Ascending aorta (tissue), 2 donors: ENCODE measurements at regions of chr2 and their contacts with region 1.

Region 1: GRCh38 chr2:64988420-64989125 is 626 bp upstream of the SLC1A4 start:
- DNase-seq: peak in 1 of 2 donors; percentile 80
- H3K4me3 ChIP-seq: peak overlapping the region; percentile 99
- H3K27ac ChIP-seq: peak overlapping the region; percentile 97 to 99
- H3K4me1 ChIP-seq: peaks cover 0 to 27% of the 10 kb centered on the region in 2 donors
- H3K27me3 ChIP-seq: no peaks in the 10 kb centered on the region
- CTCF ChIP-seq: peak; percentile 53 to 55 (median 54)

Region 2: DNA sequence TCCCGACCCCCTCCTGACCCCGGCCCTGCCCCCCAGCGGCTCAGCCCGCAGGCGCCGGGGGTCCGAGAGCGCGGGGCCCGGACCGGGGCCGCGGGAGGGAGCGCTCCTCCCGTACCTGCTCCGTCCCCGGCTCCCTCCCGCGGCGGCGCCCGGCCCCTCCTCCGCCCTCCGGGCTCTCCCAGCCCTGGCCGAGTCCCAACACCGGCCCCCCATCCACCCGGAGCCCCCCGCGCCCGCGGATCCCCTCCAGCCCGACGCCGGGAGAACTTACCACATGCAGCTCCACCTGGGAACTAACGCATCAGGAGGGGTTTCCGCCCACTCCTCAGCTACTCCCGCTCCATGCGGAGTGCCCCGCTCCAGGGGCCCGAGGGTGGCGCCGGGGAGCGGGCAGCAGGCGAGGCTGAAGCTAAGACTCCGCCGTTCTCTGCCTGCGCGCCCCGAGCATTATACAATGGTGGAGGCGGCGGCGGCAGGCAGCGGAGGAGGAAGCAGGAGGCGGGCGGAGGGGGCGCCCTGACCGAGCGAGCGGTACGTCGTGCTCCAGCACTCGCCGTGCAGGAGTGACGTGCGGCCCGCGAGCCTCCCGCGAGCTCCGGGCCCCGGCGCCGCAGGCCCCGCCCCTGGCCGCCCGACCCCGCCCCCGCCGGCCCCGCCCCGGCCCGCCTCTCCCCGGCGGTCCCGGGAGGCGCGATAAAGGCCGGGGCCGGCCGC is 335.1 kb before region 1 on chr2 and contains the start of gene SERTAD2:
- intact Hi-C with region 1: loop called (anchors 5 kb)
- DNase-seq: peak; percentile 49 to 94
- H3K4me3 ChIP-seq: peak within 1 kb of the TSS; percentile 95 to 98
- H3K27ac ChIP-seq: peak within 1 kb of the TSS; percentile 99
- H3K4me1 ChIP-seq: peaks cover 0 to 21% of the 10 kb centered on the region in 2 donors
- H3K27me3 ChIP-seq: no peaks in the 10 kb centered on the region
- CTCF ChIP-seq: no peak
- total RNA-seq, gene SERTAD2: 8.7 TPM

Region 3: DNA sequence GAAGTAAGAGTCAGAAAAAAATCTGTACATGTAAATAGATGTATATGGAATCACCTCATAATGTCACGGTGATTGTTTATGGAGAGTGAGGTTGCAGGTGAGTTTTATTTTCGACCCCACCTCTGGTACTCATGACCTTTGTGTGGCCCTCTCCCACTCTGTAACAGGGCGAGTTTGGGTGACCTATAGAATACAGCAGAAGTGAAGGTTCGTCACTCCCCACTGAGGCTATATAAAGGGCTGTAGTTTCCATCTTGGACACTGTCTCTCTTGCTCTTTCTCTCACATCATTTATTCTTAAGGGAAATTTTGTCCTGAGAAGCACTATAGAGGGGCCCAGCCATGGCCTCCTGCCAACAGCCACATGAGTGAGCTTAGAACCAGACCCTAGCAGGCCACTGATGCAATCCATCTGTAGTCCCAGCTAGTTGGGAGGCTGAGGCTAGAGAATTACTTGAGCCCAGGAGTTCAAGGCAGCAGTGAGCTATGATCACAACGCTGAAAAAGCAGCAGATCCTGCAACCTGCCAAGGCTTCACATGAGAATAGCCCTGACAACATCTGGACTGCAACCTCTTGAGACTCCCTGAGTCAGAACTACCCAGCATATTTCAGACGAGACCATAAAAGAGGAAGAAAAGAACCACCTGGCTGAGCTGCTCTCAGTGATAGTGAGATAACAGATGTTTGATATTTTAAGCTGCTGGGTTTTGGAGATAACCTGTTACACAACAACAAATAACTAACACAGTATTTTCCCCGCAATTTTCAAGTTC is 73.7 kb before region 1 on chr2:
- intact Hi-C with region 1: loop called (anchors 5 kb)
- DNase-seq: no peak
- H3K4me3 ChIP-seq: no peak overlapping the region
- H3K27ac ChIP-seq: no peak overlapping the region
- H3K4me1 ChIP-seq: no peaks in the 10 kb centered on the region
- H3K27me3 ChIP-seq: no peaks in the 10 kb centered on the region
- CTCF ChIP-seq: no peak

Region 4: GRCh38 chr2:64943387-64944150 is 45.0 kb before region 1 on chr2:
- intact Hi-C with region 1: loop called (anchors 2 kb)
- DNase-seq: peak; percentile 31 to 88
- H3K4me3 ChIP-seq: no peak overlapping the region
- H3K27ac ChIP-seq: peak overlapping the region; percentile 49 to 59
- H3K4me1 ChIP-seq: peaks cover 4 to 11% of the 10 kb centered on the region in 2 donors
- H3K27me3 ChIP-seq: no peaks in the 10 kb centered on the region
- CTCF ChIP-seq: no peak

Region 5: DNA sequence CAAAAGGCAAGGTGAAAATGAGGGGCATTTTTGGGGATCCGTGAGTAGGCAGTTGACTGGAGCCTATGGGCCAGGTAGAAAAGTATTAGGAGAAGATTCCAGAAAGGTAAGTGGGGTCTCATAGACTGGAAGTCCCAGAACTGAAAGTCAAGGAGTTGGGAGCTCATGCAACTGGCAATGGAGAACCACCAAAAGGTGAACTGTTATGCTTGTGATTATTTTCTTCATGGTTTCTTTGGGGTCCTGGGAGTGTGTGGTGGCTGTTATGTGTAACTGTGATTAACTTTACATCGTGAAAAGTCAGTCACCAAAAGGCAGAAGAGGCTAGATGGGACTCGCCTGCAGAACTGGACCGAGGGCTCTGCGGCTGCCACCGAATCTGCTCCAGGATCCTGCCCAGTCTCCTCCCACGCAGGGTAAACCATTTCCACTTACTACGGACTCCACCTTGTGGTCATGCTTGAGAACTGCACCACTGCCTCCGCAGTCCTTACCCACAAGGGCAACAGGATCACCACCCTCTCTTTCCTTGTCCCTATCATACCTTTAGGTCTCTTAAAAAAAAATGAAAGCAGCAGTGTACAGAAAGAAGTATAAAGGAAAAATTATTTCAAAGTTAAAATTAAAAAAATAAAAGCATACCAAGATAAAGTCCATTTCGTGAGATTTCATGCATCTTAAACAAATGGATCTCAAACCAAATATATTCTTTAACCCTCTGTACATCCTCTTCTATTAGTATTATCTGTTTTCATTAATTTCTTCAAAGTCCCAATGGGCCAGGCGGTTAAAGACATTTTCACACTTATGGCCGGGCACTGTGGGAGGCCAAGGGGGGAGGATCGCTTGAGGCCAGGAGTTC is 52.1 kb after region 1 on chr2:
- intact Hi-C with region 1: loop called (anchors 5 kb)
- DNase-seq: peak; percentile 56 to 93
- H3K4me3 ChIP-seq: peak overlapping the region; percentile 32 to 33
- H3K27ac ChIP-seq: no peak overlapping the region
- H3K4me1 ChIP-seq: no peaks in the 10 kb centered on the region
- H3K27me3 ChIP-seq: no peaks in the 10 kb centered on the region
- CTCF ChIP-seq: peak; percentile 91 to 97 (median 97)

Region 6: DNA sequence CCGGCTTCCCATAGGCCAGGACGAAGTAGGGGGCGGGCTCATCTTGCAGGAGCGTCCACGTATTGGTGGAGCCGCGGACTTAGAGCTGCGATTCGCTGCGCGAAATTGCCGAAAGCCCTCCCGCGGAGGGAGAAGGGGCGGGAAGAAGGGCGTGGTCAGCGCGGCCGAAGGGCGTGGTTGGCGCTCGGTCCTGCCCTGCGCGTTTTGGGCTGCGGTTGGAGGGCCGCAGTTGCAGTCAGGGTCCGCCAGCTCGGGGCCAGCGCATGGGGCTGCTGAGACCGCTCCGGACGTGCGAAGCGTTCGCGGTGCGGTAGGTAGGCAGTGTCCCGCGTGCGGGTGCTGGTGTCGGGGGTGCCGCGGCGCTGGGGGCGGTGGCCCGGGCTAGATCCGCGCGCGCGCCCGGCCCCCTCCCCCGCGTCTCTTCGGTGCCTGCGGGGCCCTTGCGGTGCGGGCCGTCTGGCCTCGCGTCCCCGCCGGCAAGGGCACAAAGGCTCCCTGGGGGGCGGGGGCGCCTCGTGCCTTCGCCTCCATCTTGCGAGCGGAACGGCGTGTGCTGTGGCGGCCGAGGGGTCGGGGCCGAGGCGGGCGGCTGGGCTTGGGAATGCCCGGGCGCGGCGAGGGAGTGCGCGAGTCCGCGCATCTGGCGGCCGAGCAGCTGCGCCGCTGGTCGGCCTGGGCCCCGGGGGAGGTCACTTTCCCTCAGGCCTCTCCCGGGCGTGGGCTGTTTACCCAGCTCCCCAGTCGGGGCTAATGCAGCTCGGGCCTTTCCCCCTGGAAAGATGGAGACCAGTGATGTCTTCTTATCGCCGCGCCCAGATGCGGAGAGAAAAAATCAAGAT is 67.9 kb after region 1 on chr2 and contains the start of gene CEP68:
- intact Hi-C with region 1: loop called (anchors 1 kb)
- DNase-seq: peak; percentile 85 to 98
- H3K4me3 ChIP-seq: peak within 1 kb of the TSS; percentile 82 to 94
- H3K27ac ChIP-seq: peak within 1 kb of the TSS; percentile 78 to 86
- H3K4me1 ChIP-seq: peaks cover 4 to 30% of the 10 kb centered on the region in 2 donors
- H3K27me3 ChIP-seq: no peaks in the 10 kb centered on the region
- CTCF ChIP-seq: no peak
- total RNA-seq, gene CEP68: 30.8 TPM

Region 7: DNA sequence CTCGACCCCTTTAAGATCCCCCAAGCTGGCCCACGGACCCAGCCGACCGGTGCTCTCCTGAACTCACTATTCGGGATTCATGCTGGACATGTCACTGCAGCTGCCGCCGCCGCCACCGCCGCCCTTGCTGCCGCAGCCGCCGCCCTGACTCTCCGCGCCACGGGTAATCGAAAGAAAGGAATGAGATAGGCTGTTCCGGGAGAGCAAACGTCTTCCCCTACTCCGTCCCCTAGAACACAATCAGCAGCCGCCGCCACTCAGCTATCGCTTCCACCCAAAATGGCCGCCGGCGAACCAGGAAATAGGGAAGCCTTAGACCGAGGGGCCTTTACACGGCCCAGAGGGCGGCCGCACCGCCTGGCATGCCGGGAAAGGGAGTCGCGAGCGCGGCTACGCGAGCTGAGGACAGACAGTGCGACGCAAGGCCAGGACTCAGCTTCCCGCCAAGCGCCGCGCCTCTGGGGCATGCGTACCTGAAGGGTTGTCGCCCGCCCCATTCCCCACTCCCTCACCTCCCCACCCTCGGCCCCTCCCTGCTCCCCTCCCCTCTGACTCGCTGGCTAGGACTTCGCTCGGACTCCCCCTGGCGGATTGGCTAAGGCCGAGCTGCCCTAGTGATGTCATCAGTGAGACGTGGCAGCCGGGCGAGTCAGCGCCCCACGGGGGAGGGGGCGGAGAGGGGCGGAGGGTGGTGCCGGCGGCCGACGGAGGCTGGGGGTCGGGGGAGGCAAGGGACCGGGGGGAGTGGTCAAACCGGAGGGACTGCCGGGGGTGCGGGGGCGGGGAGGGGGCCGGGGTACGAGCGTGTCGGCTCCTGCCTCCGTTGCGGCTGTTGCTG is 141.5 kb after region 1 on chr2 and contains the start of gene RAB1A:
- intact Hi-C with region 1: loop called (anchors 1 kb)
- DNase-seq: peak; percentile 98 to 100
- H3K4me3 ChIP-seq: peak within 1 kb of the TSS; percentile 87 to 99
- H3K27ac ChIP-seq: peak within 1 kb of the TSS; percentile 98 to 99
- H3K4me1 ChIP-seq: peaks cover 14 to 29% of the 10 kb centered on the region in 2 donors
- H3K27me3 ChIP-seq: no peaks in the 10 kb centered on the region
- CTCF ChIP-seq: peak; percentile 13 to 50 (median 39)
- total RNA-seq, gene RAB1A: 56.4 TPM